Cardiac septum (tissue), 1 donor: ENCODE measurements at regions of chr5 and their contacts with region 1.

Region 1: DNA sequence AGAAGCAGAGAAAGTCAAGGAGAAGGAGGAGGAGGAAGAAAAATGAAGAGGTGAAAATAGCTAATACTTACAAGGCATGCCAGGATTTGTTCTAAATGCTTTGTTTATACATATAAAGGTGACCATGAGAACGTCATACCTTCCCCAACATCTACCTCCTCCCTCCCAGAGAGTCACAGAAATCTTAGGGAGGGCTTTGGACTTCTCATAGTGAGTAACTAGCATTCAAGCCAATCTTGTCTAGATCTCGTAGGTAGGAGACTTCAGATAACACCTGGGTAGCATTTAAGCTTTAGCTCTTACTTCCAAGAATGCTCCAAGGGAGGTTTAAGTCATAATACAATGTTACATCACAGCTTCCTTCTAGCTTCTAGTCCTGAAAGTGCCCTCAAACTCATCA is 36.5 kb upstream of the GPBP1 start:
- DNase-seq: no peak

Region 2: GRCh38 chr5:56918054-56918453 is 219.3 kb before region 1 on chr5:
- intact Hi-C with region 1: no loop called
- DNase-seq: no peak

Region 3: DNA sequence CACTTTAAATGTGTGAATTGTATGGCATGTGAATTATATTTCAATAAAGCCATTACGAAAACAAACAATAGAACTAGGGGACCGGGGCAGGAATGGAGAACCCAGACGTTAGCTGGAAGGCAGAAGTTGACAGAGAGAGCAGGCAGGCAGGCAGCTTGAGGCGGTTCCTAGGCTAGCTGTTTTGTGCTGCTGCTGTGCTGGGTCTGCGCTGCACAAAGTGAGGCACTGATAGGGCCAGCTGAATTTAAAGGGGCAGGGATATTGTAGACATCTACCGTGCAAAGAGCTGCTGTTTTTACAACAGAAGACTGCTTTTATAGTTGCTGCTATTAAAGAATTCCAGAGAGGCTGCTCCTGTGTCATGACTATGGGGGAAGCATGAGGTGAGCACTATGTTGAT is 163.9 kb before region 1 on chr5:
- intact Hi-C with region 1: no loop called
- DNase-seq: no peak

Region 4: GRCh38 chr5:57221049-57221568 is 83.7 kb after region 1 on chr5:
- intact Hi-C with region 1: loop called (anchors 5 kb)
- DNase-seq: no peak